GM10248 (cell line): ENCODE measurements at regions of chr7 and their contacts with region 1.

Region 1: DNA sequence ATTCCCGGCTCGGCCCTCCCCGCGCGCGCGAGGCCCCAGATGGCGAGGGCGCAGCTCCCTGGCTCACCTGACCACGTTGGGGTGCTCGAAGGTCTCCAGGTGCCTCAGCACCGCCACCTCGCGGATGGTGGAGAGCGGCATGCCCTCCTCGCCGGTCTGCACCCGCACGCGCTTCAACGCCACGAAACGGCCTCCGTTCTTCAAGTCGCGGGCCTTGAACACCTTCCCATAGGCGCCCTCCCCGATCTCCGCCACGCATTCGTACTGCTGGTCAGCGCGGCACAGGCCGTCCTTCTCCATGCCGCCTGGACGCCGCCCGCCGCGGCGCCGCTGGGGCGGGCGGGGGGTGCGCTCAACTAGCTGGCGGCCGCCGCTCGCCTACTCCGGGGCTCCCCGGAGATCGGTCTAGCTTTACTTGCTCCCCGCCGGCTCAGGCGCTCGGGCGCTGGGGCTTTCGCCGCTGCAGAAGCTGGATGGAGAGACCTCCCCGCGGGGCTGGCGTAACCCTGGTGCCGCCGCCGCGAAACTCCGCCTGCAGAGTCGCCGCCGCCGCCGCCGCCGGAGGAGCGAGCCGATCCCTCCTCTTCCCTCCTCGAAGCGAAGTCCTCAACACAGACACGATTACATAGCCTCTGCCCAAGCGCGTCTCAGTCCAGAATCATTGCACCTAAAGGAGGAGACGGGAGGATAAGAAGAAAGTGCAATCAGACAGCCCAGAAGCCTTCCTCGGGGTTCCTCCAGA is 3.2 kb downstream of the CDK6 start:
- DNase-seq: peak; percentile 80
- CTCF ChIP-seq: peak; percentile 89

Region 2: DNA sequence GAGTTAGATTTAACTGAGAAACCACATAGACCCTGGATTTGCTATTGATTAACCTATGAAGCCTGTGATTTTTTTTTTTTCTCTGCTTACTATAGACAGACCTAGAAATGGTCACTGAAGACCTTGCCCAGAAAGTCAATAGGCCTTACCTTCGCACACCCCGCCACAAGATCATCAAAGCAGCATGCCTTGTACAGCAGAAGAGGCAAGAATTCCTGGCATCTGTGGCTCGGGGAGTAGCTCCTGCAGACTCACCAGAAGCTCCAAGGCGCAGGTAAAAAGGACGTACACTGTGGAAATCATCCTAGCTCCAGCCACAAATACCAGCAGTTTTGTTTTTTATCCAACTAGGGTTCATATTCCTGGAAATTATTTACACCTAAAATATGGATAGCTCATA is 442.1 kb before region 1 on chr7:
- CTCF ChIA-PET with region 1: no interaction called
- POLR2A ChIA-PET with region 1: no interaction called
- DNase-seq: no peak
- CTCF ChIP-seq: no peak

Region 3: DNA sequence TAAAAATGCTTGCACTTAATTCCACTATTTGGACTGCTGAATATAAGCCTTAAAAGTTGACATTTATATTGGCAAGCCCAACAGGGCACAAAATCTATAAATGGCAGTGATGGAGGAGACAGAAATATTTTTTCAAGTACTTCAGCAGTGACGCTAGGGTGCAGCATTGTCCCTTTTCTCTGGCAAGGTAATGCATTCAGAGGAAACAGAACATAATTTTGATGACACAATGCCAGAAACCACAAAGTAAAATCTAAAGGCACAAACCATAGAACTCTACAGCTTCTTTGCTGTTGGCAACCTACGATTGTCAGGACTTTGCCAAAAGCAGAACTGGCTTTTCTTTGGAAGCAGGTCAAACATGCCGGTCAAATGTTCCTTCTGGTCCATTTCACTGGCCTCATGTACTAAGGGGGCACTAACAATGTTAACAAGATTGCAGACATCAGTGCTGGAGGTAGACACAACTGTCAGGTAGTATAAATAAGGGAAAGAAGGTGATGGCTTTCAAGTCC is 212.1 kb before region 1 on chr7:
- CTCF ChIA-PET with region 1: interaction called, 44 read pairs
- POLR2A ChIA-PET with region 1: no interaction called
- DNase-seq: peak; percentile 49
- CTCF ChIP-seq: peak; percentile 73

Region 4: GRCh38 chr7:92648067-92648466 is 185.1 kb before region 1 on chr7:
- CTCF ChIA-PET with region 1: interaction called, 10 read pairs
- POLR2A ChIA-PET with region 1: no interaction called
- DNase-seq: peak; percentile 35
- CTCF ChIP-seq: no peak

Region 5: GRCh38 chr7:92698237-92698841 is 134.9 kb before region 1 on chr7:
- CTCF ChIA-PET with region 1: interaction called, 20 read pairs
- POLR2A ChIA-PET with region 1: no interaction called
- DNase-seq: no peak
- CTCF ChIP-seq: no peak

Region 6: GRCh38 chr7:92797693-92798092 is 35.5 kb before region 1 on chr7:
- CTCF ChIA-PET with region 1: interaction called, 11 read pairs
- POLR2A ChIA-PET with region 1: no interaction called
- DNase-seq: peak; percentile 13
- CTCF ChIP-seq: no peak

Region 7: GRCh38 chr7:92815412-92815811 is 17.8 kb before region 1 on chr7:
- CTCF ChIA-PET with region 1: interaction called, 24 read pairs
- POLR2A ChIA-PET with region 1: interaction called, 3 read pairs
- DNase-seq: no peak
- CTCF ChIP-seq: no peak